ENCODE measurements at regions of chr6 and their contacts with region 1.

Region 1: DNA sequence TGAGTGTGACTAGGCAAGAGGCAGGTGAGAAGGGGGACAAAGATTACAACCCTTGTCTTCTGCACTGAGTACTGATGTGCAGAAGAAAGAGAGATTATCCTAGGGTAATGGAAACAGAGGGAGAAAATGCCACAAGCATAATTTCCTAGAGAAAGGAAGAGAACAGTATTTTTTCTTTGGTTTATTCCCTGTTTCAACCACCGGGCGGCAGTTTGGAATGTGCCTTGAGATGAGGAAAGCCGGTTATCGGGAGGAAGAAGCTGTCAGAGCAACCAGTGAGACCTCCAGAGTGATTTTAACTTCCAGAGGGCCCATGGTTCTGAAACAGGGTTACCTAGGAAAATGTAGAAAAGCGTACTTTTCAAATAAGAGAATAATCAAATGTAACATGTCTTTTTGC is 121.4 kb downstream of the REV3L start:
- DNase-seq: peak in 6 of 10 donors; percentile 34 to 87 (median 46)

Region 2: DNA sequence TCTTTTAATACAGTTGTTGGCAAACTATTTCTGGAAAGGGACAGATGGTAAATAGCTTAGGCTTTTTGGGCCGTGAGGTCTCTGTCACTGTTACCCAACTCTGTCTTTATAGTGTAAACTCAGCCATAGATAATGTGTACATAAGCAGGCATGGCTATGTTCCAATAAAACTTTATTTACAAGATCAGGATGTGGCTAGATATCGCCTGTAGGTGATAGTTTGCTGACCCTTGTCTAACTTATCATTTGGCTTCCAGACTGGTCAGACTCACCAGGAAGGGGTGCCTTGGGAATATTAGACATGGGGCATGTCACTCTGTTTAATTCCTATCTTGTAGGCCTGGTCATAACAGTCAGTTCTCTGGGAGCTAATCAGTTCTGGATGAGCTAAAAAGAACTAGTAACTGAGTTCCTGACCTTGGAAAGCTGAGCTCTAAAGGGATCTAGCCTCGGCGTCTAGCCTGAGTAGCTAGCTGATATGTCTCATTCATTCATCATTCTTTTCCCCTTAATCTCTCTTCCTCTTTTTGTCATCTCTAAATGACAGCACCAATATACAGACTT is 110.8 kb before region 1 on chr6:
- intact Hi-C with region 1: no loop called
- DNase-seq: no peak

Region 3: DNA sequence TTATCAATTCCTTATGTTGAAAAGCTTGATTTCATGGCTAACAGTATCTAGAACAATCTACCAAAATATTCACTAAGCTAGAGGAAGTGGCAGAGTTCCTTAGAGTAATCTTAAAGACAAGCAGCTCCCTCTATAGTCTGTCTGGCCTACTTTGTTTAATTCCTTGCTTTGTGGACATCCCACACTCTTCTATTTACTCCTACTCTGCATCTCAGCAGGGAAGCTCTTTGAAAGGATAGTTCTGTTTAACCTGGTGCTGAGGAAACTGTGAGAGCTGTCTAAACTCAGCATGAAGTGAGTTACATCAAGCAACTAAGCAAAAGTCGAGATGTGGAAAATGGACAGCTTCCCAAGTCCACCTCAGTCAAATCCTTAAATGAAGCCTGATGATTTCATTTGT is 117.1 kb after region 1 on chr6:
- intact Hi-C with region 1: loop called (anchors 2 kb)
- DNase-seq: no peak

Region 4: GRCh38 chr6:111642463-111643158 is 281.0 kb after region 1 on chr6:
- intact Hi-C with region 1: loop called (anchors 1 kb)
- DNase-seq: peak in 6 of 10 donors; percentile 34 to 91 (median 54)

Region 5: DNA sequence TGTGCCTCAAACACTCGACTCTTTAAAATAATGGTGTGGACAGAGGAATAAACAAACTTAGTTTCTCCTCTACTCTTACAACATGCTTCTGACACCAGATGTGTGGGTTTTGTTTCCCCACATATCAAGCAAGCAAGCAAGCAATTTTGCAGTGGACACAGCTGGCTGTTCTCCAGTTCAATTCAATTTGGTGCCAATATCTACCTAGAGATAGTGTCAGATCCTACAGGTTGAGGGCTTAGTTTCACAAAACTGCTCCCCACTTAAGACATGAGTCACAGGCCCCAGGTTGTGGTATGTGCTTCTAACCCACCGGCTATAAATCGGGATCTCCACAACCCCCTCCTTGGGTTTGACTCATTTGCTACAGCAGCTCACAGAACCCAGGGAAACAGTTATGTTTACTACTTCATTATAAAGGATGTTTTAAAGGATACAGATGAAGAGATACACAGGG is 375.4 kb after region 1 on chr6:
- intact Hi-C with region 1: no loop called
- DNase-seq: no peak